ENCODE measurements at regions of chr19 and their contacts with region 1.

Region 1: DNA sequence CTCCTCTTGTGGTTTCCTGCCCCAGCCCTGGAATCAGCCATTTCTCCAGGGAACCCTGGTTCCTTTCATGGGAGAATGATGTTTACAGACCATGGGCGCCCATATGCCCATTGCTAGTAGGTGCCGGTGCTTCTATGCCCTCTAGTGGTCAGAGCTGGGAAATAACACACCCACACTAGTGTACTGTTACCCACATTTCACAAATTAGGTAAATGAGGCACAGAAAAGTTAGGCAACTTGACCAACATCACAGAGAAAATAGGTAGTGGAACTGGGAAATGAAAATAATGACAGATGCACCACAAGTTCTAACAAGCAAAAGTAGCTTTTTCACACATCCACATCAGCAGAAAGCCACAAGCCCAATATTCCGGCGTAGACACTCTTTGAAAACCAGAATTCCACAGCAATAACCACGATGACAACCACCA is 1.3 kb upstream of the CEACAM3 start:
- DNase-seq: peak; percentile 64
- H3K4me3 Mint-ChIP-seq: no peak overlapping the region
- H3K27ac Mint-ChIP-seq: no peak overlapping the region
- H3K4me1 Mint-ChIP-seq: peaks cover 10% of the 10 kb centered on the region
- H3K27me3 Mint-ChIP-seq: peaks cover 70% of the 10 kb centered on the region
- CTCF ChIP-seq: peak; percentile 75

Region 2: GRCh38 chr19:41746593-41747227 is 48.3 kb before region 1 on chr19:
- CTCF ChIA-PET with region 1: interaction called, 12 read pairs
- POLR2A ChIA-PET with region 1: no interaction called
- intact Hi-C with region 1: no loop called
- DNase-seq: peak; percentile 66
- H3K4me3 Mint-ChIP-seq: no peak overlapping the region
- H3K27ac Mint-ChIP-seq: no peak overlapping the region
- H3K4me1 Mint-ChIP-seq: no peaks in the 10 kb centered on the region
- H3K27me3 Mint-ChIP-seq: peaks cover 79% of the 10 kb centered on the region
- CTCF ChIP-seq: peak; percentile 69

Region 3: DNA sequence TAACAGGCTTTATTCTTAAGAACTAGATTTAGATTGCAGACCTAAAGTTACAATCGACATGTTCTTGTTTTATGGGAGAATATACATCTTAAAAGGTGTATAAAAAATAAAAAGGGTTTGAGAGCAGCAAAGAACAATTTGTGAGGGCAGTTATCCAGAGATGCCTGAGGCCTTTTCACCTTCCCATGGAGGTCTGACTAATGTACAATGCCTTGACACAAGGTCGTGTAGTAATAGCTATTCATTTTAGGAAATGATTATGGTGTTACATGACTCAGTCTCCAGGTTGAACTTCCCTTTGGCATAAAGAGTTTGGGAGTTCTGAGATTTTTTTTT is 19.7 kb before region 1 on chr19:
- CTCF ChIA-PET with region 1: interaction called, 19 read pairs
- POLR2A ChIA-PET with region 1: no interaction called
- intact Hi-C with region 1: no loop called
- DNase-seq: peak; percentile 82
- H3K4me3 Mint-ChIP-seq: no peak overlapping the region
- H3K27ac Mint-ChIP-seq: no peak overlapping the region
- H3K4me1 Mint-ChIP-seq: peaks cover 7% of the 10 kb centered on the region
- H3K27me3 Mint-ChIP-seq: peaks cover 56% of the 10 kb centered on the region
- CTCF ChIP-seq: no peak

Region 4: GRCh38 chr19:41821003-41821735 is 26.1 kb after region 1 on chr19:
- CTCF ChIA-PET with region 1: interaction called, 13 read pairs
- POLR2A ChIA-PET with region 1: no interaction called
- intact Hi-C with region 1: loop called (anchors 1 kb)
- DNase-seq: peak; percentile 66
- H3K4me3 Mint-ChIP-seq: no peak overlapping the region
- H3K27ac Mint-ChIP-seq: no peak overlapping the region
- H3K4me1 Mint-ChIP-seq: no peaks in the 10 kb centered on the region
- H3K27me3 Mint-ChIP-seq: peaks cover 45% of the 10 kb centered on the region
- CTCF ChIP-seq: peak; percentile 61

Region 5: DNA sequence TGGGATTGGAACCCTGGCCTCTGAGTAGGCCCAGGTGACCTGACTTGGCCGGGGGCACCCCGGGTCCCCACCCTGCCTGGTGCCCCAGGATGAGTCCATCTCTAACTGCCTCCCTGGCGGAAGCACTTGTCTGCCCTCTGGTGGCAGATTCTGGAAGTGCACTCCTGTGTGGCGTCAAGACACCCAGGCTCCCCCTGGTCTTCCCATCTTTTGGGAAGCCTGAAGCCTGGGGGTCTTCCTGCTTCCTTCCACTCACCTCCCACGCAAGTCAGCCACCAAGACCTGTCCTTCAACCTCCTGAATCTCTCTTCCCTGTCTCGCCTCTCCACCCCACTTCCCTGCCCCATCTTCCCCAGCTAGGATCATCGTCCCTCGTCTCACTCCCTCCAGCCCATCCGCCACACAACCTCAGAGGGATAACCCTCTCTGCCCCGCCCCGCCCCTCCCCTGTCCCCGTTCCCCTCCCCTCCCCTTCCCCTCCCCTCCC is 156.7 kb after region 1 on chr19:
- CTCF ChIA-PET with region 1: interaction called, 4 read pairs
- POLR2A ChIA-PET with region 1: no interaction called
- intact Hi-C with region 1: loop called (anchors 5 kb)
- DNase-seq: peak; percentile 79
- H3K4me3 Mint-ChIP-seq: no peak overlapping the region
- H3K27ac Mint-ChIP-seq: no peak overlapping the region
- H3K4me1 Mint-ChIP-seq: peaks cover 4% of the 10 kb centered on the region
- H3K27me3 Mint-ChIP-seq: no peaks in the 10 kb centered on the region
- CTCF ChIP-seq: peak; percentile 98

Measured in MCF 10A (cell line).